MCF 10A (cell line): ENCODE measurements at regions of chr3 and their contacts with region 1.

Region 1: GRCh38 chr3:122392868-122393844 is 9.2 kb downstream of the FAM162A start:
- DNase-seq: peak; percentile 56
- H3K4me3 Mint-ChIP-seq: no peak overlapping the region
- H3K27ac Mint-ChIP-seq: peak overlapping the region; percentile 89
- H3K4me1 Mint-ChIP-seq: peaks cover 25% of the 10 kb centered on the region
- H3K27me3 Mint-ChIP-seq: no peaks in the 10 kb centered on the region
- CTCF ChIP-seq: peak; percentile 67

Region 2: DNA sequence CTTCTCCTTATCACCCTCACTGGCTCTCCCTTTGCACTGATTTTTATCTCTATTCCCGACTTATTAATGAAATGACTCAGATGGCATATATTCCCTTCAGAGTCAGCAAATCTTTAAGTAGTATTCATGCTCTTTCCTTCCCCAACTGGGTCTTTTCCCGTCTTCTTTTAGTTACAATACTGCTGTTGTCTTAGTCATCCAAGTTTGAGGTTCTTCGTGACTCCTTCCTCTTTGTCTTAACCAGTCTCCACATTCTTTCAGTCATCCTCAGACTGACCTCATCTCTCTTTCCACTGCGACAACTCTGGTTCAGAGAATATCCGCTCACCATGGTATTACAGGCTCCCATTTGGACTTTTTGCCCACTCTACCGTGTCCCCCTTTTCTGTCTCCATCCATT is 10.3 kb after region 1 on chr3:
- CTCF ChIA-PET with region 1: interaction called, 11 read pairs
- POLR2A ChIA-PET with region 1: interaction called, 8 read pairs
- intact Hi-C with region 1: no loop called
- DNase-seq: no peak
- H3K4me3 Mint-ChIP-seq: no peak overlapping the region
- H3K27ac Mint-ChIP-seq: no peak overlapping the region
- H3K4me1 Mint-ChIP-seq: peaks cover 6% of the 10 kb centered on the region
- H3K27me3 Mint-ChIP-seq: no peaks in the 10 kb centered on the region
- CTCF ChIP-seq: no peak

Region 3: GRCh38 chr3:122409446-122409845 is 16.3 kb after region 1 on chr3:
- CTCF ChIA-PET with region 1: interaction called, 20 read pairs
- POLR2A ChIA-PET with region 1: interaction called, 68 read pairs
- intact Hi-C with region 1: no loop called
- DNase-seq: no peak
- H3K4me3 Mint-ChIP-seq: no peak overlapping the region
- H3K27ac Mint-ChIP-seq: no peak overlapping the region
- H3K4me1 Mint-ChIP-seq: peaks cover 24% of the 10 kb centered on the region
- H3K27me3 Mint-ChIP-seq: no peaks in the 10 kb centered on the region
- CTCF ChIP-seq: no peak